Esophagus squamous epithelium (tissue), 5 donors: ENCODE measurements at regions of chr10 and their contacts with region 1.

Region 1: GRCh38 chr10:48976196-48976595 is 36.6 kb upstream of the LRRC18 start:
- DNase-seq: no peak
- H3K4me3 ChIP-seq: no peak overlapping the region
- H3K27ac ChIP-seq: no peak overlapping the region
- H3K4me1 ChIP-seq: peaks cover 0 to 4% (median 0%) of the 10 kb centered on the region in 3 donors
- H3K27me3 ChIP-seq: peaks cover 0 to 8% (median 0%) of the 10 kb centered on the region in 4 donors
- CTCF ChIP-seq: peak in 4 of 6 experiments; percentile 18 to 46 (median 30)
- POLR2A ChIP-seq: no peak

Region 2: GRCh38 chr10:49164559-49165188 is 188.5 kb after region 1 on chr10:
- intact Hi-C with region 1: loop called (anchors 5 kb)
- DNase-seq: no peak
- H3K4me3 ChIP-seq: no peak overlapping the region
- H3K27ac ChIP-seq: no peak overlapping the region
- H3K4me1 ChIP-seq: peaks cover 0 to 8% (median 0%) of the 10 kb centered on the region in 3 donors
- H3K27me3 ChIP-seq: no peaks in the 10 kb centered on the region
- CTCF ChIP-seq: peak; percentile 30 to 70 (median 52)
- POLR2A ChIP-seq: no peak